Activated CD4-positive, alpha-beta memory T cell treated with anti-CD3 and anti-CD28 coated beads for 36 hours (primary cell): ENCODE measurements at regions of chr5 and their contacts with region 1.

Region 1: GRCh38 chr5:65925601-65926275 is 637 bp upstream of the ERBIN start:
- DNase-seq: peak; percentile 81
- H3K4me3 Mint-ChIP-seq: peak overlapping the region; percentile 89
- H3K27ac Mint-ChIP-seq: peak overlapping the region; percentile 98
- H3K4me1 Mint-ChIP-seq: peaks cover 30% of the 10 kb centered on the region
- H3K27me3 Mint-ChIP-seq: no peaks in the 10 kb centered on the region

Region 2: DNA sequence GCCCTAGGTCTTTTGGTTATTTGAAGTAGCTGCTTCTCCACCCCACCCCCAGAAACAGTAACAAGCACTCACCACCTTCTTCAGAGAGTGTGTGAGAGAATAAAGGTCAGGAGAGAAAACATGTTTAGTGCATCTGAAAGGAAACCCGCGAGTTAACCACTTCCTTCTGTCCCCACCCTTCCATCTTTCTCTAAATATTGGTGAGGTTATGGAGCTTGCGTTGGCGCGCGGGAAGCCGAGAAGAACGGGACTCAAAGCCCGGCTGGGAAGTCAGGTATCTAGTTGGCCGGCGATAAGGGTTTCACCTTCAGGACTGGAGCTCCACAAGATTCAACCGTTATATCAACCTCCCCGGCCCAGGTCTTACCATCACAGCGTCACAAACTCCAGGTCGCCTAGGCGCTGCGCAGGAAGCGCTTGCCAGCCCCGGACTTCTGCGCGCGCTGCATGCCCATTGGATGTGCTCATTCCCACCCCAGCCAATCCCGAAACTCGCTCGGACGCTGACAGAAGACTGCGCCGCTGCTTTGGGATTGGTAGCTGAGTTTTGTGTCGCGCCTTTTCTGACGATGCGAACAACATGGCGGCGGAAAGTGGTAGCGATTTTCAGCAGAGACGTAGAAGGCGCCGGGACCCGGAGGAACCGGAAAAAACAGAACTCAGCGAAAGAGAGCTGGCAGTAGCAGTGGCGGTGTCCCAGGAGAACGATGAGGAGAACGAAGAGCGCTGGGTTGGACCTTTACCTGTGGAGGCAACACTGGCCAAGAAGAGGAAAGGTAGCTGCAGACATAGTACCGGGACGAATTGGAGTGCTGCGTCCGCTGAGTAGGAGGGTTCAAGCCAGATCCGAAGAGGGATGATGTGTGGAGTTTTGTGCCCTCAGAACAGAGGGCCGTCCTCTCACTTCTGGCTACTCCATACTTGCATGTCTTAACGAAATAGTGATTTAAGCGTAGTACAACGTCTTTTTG is 362.7 kb before region 1 on chr5 and contains the starts of genes CENPK and PPWD1:
- CTCF ChIA-PET with region 1: no interaction called
- POLR2A ChIA-PET with region 1: no interaction called
- intact Hi-C with region 1: loop called (anchors 5 kb)
- DNase-seq: peak; percentile 98
- H3K4me3 Mint-ChIP-seq: peak within 1 kb of the TSS; percentile 92
- H3K27ac Mint-ChIP-seq: peak within 1 kb of the TSS; percentile 93
- H3K4me1 Mint-ChIP-seq: peaks cover 45% of the 10 kb centered on the region
- H3K27me3 Mint-ChIP-seq: no peaks in the 10 kb centered on the region
- total RNA-seq, gene CENPK: 79.7 to 87.5 TPM
- total RNA-seq, gene PPWD1: 38.0 to 42.2 TPM

Region 3: DNA sequence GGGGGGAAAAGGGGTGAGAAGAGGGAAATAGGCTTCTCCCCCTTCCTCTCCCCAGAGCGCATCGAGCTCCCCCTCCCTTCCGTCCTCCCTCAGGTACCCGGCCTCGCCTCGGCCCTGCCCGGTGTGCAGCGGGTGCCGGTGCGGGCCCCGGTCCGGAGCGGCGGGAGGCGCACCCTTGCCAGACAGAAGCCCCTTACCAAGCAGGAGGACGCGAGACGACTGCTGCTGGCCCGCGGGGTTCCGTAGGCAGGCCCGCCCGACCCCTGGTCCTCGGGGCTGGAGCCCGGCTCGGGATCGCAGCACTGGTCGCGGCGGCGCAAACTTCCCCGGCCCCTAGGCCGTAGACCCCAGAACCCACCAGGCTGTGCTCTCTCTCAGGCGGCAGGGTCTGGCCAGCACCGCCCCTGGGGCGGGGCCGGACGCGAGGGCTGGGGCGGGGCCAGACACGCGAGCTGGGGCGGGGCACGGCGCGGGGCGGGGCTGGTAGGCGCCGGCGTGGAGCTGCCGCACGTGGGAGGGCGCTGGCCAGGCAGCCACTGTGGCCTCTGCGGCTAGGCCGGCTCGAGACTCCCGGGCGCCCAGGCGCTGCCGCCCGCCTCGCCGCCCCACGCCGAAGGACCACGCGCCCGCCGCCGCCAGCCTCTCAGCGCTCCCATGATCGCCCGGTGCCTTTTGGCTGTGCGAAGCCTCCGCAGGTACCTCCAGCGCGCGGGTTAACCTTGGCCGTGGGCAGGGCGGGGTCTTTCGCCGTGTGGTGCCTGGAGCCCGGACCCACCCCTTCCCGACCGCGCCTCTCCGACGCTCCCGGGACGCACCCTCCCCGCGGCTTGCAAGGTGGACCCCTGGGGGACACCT is 203.8 kb before region 1 on chr5 and contains the starts of genes NLN and SGTB:
- CTCF ChIA-PET with region 1: interaction called, 3 read pairs
- POLR2A ChIA-PET with region 1: interaction called, 4 read pairs
- intact Hi-C with region 1: loop called (anchors 2 kb)
- DNase-seq: peak; percentile 88
- H3K4me3 Mint-ChIP-seq: peak within 1 kb of the TSS; percentile 89
- H3K27ac Mint-ChIP-seq: peak within 1 kb of the TSS; percentile 91
- H3K4me1 Mint-ChIP-seq: peaks cover 25% of the 10 kb centered on the region
- H3K27me3 Mint-ChIP-seq: no peaks in the 10 kb centered on the region
- total RNA-seq, gene NLN: 22.7 to 23.7 TPM
- total RNA-seq, gene SGTB: 16.5 to 16.7 TPM

Region 4: DNA sequence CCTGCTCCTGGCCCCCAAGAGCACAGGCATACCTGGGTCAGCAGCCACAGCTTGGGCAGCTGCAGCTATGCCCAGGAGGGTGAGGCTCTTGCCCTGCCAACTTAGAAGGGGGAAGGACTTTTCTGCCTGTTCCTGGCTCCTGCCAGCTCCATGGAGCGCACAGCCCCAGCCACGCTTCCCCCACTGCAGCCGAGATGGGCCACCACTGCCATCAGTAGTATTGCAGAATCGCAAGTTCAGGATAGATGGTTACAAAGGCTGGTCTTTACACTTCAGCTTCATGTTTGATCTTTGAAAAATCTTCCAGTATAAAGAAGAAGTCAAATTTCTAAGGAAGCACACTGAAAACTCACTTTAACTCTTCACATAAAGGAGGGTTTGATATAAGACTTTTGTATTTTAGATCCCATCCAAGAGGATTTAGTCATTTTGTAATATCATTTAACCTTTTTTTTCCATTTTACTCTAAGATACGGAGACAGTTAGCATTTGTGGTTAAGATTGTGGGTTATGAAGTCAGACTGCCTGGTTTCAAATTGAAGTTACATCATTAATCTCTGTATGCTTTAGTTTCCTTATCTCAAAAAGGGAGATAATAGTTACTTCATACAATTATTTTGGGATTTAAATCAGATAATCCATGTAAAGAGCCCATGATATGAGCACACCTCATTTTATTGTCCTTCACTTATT is 121.9 kb before region 1 on chr5:
- CTCF ChIA-PET with region 1: no interaction called
- POLR2A ChIA-PET with region 1: interaction called, 4 read pairs
- intact Hi-C with region 1: loop called (anchors 2 kb)
- DNase-seq: no peak
- H3K4me3 Mint-ChIP-seq: peak overlapping the region; percentile 35
- H3K27ac Mint-ChIP-seq: no peak overlapping the region
- H3K4me1 Mint-ChIP-seq: peaks cover 29% of the 10 kb centered on the region
- H3K27me3 Mint-ChIP-seq: peaks cover 2% of the 10 kb centered on the region

Region 5: DNA sequence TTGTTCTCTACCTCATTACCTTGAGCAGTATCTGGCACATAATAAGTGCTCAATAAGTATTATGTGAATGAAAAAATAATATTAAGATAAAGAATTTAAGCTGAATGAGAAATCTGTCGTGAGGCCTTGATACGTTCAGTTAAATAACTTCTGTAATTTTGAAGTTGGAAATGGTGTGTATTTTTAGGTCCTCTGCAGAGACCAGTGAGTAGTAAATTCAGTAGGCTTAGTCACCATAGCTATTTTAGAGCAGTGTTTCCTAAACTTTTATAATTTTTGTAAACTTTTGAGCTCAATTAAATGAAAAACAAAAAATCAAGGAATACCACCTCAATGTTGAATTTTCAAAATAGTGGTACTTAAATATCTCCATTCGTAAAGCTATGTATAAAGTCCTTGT is 25.6 kb after region 1 on chr5:
- CTCF ChIA-PET with region 1: no interaction called
- POLR2A ChIA-PET with region 1: no interaction called
- intact Hi-C with region 1: no loop called
- DNase-seq: no peak
- H3K4me3 Mint-ChIP-seq: no peak overlapping the region
- H3K27ac Mint-ChIP-seq: no peak overlapping the region
- H3K4me1 Mint-ChIP-seq: peaks cover 42% of the 10 kb centered on the region
- H3K27me3 Mint-ChIP-seq: no peaks in the 10 kb centered on the region

Region 6: DNA sequence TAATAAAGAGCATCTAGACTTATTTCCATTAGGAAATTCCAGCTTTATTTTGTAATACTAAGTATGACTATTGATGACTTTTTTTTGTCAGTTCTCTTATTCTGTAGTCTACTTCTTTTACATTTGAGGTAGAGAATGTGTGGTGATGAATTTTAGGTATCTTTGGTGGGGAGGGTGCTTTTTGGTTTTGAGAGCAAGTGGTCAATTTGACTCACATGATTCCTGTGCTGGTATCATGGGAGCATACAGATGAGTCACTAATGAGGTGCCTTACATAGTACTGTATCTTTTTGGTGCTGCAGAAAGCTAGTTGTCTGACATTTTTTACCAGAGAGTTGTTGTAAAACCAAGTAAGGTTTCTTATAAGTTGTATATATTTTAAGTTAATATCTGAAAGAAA is 35.9 kb after region 1 on chr5:
- CTCF ChIA-PET with region 1: interaction called, 3 read pairs
- POLR2A ChIA-PET with region 1: interaction called, 3 read pairs
- intact Hi-C with region 1: loop called (anchors 1 kb)
- DNase-seq: peak; percentile 24
- H3K4me3 Mint-ChIP-seq: no peak overlapping the region
- H3K27ac Mint-ChIP-seq: peak overlapping the region; percentile 1
- H3K4me1 Mint-ChIP-seq: peaks cover 47% of the 10 kb centered on the region
- H3K27me3 Mint-ChIP-seq: no peaks in the 10 kb centered on the region

Region 7: GRCh38 chr5:66074901-66075300 is 149.2 kb after region 1 on chr5:
- CTCF ChIA-PET with region 1: no interaction called
- POLR2A ChIA-PET with region 1: interaction called, 3 read pairs
- intact Hi-C with region 1: loop called (anchors 5 kb)
- DNase-seq: no peak
- H3K4me3 Mint-ChIP-seq: no peak overlapping the region
- H3K27ac Mint-ChIP-seq: no peak overlapping the region
- H3K4me1 Mint-ChIP-seq: peaks cover 8% of the 10 kb centered on the region
- H3K27me3 Mint-ChIP-seq: no peaks in the 10 kb centered on the region

Region 8: DNA sequence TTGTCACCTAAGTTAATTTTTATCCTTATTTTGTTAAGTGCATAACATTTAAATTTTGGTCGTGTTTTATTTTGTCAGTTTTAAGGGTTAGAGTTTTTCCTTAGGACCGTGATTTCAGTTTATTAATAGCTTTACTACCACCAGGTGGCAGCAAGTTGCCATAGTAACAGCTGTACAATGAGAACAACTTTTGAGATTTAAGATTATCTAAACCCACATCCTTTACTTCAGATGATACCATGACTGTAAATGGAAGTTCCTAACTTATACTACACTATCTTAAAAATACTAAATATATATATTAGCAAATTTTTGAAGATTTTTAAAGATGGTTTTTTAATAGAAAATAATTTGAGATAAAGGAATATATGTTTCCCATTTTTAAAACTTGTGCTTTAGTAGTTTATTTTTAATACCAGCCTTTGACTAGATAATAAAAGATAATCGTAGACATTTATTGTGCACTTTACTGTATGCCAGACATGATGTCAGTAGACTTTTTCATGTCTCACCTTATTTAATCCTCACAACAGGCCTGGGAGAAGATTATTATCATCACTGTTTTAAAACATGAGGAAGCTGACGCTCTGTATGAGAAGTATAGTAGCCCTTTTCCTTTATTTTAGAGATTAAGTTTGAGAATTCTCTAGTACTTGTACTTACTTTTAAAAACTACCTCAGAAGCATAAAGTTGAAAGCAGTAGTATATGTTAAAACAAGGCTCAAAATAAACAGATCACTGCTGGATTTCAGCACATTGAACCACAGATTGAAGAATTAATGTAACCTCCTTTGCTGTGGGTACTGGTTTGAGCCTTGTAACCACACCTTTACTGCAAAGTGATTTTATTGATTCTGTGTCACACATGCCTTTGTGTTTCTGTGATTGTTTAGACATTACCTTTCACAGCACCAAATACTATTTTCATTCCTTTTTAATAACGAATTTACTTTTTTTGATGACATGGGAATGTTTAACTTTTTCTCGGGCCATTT is 245.9 kb after region 1 on chr5:
- CTCF ChIA-PET with region 1: interaction called, 3 read pairs
- POLR2A ChIA-PET with region 1: no interaction called
- intact Hi-C with region 1: loop called (anchors 2 kb)
- DNase-seq: peak; percentile 48
- H3K4me3 Mint-ChIP-seq: no peak overlapping the region
- H3K27ac Mint-ChIP-seq: no peak overlapping the region
- H3K4me1 Mint-ChIP-seq: peaks cover 29% of the 10 kb centered on the region
- H3K27me3 Mint-ChIP-seq: no peaks in the 10 kb centered on the region

Region 9: GRCh38 chr5:66542711-66543110 is 617.0 kb after region 1 on chr5:
- CTCF ChIA-PET with region 1: no interaction called
- POLR2A ChIA-PET with region 1: no interaction called
- intact Hi-C with region 1: no loop called
- DNase-seq: no peak
- H3K4me3 Mint-ChIP-seq: no peak overlapping the region
- H3K27ac Mint-ChIP-seq: no peak overlapping the region
- H3K4me1 Mint-ChIP-seq: peaks cover 13% of the 10 kb centered on the region
- H3K27me3 Mint-ChIP-seq: no peaks in the 10 kb centered on the region